Prostate gland (tissue), 2 donors: ENCODE measurements at regions of chr11 and their contacts with region 1.

Region 1: DNA sequence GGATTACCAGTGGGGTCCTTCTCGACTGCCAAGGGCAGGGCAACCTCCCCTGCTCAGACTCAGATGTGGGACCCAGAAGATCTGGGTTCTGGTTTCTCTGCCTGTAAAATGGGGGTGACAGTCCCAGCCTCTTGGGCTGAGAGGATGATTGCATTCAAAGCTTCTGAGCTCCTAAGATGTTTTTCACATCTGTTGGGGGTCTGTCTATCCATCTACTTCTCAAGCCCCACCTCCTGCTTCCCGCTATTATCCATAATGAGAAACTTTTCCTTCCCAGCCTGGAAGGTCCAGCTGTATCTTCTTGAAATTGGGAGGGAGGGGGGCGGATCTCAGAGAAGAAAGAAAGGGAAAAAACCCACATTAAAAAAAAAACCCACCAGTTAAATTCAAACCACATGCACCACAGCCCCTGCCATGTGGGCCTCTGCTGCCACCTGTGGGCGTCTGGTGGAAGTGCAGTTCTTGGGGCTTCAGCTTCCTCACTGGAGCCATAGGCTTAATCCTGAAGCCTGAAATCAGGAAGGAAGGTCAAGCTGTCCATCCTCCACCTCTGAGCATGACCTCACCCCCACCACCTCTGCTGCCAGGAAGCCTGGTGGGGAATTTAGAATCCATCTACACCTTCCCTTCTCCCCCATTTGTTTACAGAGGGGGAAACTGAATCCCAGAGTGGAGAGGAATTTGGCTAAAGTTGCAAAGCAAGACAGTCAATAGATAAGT is 27.3 kb downstream of the ARHGEF17 start:
- DNase-seq: peak; percentile 72
- H3K4me3 ChIP-seq: no peak overlapping the region
- H3K27ac ChIP-seq: peak overlapping the region; percentile 56 to 71
- H3K4me1 ChIP-seq: peaks cover 3% of the 10 kb centered on the region
- H3K27me3 ChIP-seq: no peaks in the 10 kb centered on the region
- CTCF ChIP-seq: peak; percentile 88 to 98 (median 94)
- POLR2A ChIP-seq: no peak

Region 2: GRCh38 chr11:73307323-73308002 is 27.9 kb before region 1 on chr11:
- intact Hi-C with region 1: loop called (anchors 1 kb)
- DNase-seq: peak; percentile 99
- H3K4me3 ChIP-seq: peak overlapping the region; percentile 67 to 76
- H3K27ac ChIP-seq: peak overlapping the region; percentile 97
- H3K4me1 ChIP-seq: peaks cover 6% of the 10 kb centered on the region
- H3K27me3 ChIP-seq: no peaks in the 10 kb centered on the region
- CTCF ChIP-seq: peak; percentile 79 to 97 (median 96)
- POLR2A ChIP-seq: peak; percentile 63

Region 3: DNA sequence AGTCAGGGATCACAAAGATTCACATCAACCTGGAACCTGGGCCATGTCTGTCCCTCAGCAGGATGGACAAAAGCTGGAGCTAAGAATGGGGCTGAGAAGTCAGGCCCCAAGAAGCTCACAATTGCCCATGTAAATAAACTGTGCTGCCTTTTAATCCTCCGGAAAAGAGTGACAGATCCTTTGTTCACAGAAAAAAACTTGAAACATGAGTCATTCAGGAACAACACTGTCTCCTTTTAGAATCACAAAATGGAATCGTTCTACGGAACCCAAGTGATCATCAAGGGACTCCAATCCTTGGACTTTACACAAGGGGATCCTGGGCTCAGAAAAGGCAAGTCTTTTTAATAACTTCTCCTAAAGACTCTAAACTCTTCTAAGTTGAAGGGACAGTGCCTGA is 76.9 kb after region 1 on chr11:
- intact Hi-C with region 1: no loop called
- DNase-seq: no peak
- H3K4me3 ChIP-seq: no peak overlapping the region
- H3K27ac ChIP-seq: no peak overlapping the region
- H3K4me1 ChIP-seq: no peaks in the 10 kb centered on the region
- H3K27me3 ChIP-seq: no peaks in the 10 kb centered on the region
- CTCF ChIP-seq: no peak
- POLR2A ChIP-seq: no peak